ENCODE measurements at regions of chr21 and their contacts with region 1.

Region 1: DNA sequence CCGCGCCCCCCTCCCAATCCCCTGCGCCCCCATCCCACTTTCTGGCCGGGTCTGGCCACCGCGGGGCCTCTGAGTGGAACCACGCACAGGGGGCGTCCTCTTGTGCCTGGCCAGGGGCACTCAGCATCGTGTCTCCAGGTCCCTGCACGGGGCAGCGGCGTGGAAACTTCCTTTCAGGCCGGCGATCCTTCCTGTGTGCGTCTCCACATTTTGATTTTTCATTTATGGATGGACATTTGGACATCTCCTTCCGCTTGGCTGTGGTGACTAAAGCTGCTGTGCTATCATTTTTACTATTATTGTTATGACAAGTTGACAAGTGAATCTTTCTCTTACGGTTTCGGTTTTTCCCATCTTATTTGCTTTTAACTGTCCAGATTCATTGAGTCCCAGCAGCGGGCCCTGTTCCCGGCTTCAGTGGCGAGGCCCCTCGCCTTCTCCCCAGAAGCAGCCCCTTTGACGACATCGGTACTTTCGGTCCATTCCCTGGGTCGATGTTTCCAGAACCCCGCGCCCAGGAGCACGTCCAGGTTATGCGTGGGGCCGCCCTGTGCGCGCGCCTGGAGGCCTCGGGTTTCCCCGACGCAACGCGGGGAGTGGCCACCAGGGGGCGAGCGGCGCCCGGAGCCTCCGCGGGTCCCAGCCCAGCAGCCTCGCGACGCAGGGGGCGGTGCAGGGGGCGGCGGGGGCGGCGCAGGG is 12.4 kb upstream of the SLC19A1 start:
- DNase-seq: peak; percentile 98
- H3K4me3 Mint-ChIP-seq: peak overlapping the region; percentile 88
- H3K27ac Mint-ChIP-seq: peak overlapping the region; percentile 90
- H3K4me1 Mint-ChIP-seq: peaks cover 25% of the 10 kb centered on the region
- H3K27me3 Mint-ChIP-seq: no peaks in the 10 kb centered on the region

Region 2: GRCh38 chr21:45478115-45478801 is 76.4 kb before region 1 on chr21:
- intact Hi-C with region 1: loop called (anchors 5 kb)
- DNase-seq: peak; percentile 93
- H3K4me3 Mint-ChIP-seq: peak overlapping the region; percentile 82
- H3K27ac Mint-ChIP-seq: peak overlapping the region; percentile 98
- H3K4me1 Mint-ChIP-seq: peaks cover 24% of the 10 kb centered on the region
- H3K27me3 Mint-ChIP-seq: no peaks in the 10 kb centered on the region

Region 3: DNA sequence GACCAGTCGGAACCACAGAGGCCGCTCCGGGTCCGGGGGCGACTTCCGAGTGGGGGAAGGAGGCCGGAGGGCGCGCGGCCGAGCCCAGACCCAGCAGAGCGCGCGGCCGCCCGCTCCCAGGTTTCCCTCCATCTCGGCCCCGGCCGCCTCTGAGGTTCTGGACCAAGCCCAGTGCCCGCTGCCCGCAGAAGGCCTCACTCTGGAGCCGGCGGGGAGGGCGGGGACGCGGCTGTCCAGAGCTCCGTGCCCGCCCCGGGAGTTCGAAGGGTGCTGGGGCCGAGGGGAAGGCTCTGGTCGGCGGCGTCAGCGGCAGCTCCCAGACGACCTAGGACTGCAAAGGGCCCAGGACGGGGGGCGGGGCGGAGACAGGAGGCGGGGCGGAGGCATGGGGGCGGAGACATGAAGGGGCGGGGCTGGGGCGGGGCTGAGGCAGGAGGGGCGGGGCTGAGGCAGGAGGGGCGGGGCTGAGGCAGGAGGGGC is 35.7 kb after region 1 on chr21:
- intact Hi-C with region 1: loop called (anchors 1 kb)
- DNase-seq: peak; percentile 91
- H3K4me3 Mint-ChIP-seq: peak overlapping the region; percentile 58
- H3K27ac Mint-ChIP-seq: no peak overlapping the region
- H3K4me1 Mint-ChIP-seq: peaks cover 12% of the 10 kb centered on the region
- H3K27me3 Mint-ChIP-seq: peaks cover 22% of the 10 kb centered on the region

Region 4: DNA sequence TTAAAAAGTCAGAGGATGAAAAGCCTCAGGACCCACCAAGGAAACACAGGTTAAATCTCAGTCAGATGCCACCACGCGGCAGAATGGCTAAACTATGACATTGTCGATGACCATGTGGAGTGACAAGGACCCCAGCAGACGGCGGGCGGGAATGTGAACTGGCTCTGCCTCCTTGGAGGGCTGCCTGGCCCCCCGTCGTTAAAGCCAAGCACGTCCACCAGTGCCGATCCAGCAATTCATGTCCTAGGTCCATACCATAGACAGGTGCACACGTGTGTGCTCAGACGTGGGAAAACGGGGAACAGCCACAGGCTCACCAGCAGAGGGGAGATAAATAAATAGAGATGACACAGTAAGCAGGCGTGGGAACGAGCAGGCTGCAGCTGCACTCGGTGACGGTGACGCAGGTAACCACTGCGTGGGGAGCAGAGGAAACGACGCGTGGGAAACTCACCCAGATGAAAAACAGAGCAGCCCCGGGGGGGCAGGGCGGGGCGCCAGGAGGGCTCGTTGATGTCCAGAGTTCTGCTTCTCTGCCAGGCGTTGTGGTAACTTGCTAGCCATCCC is 60.6 kb after region 1 on chr21:
- intact Hi-C with region 1: loop called (anchors 2 kb)
- DNase-seq: peak; percentile 91
- H3K4me3 Mint-ChIP-seq: peak overlapping the region; percentile 83
- H3K27ac Mint-ChIP-seq: peak overlapping the region; percentile 64
- H3K4me1 Mint-ChIP-seq: peaks cover 15% of the 10 kb centered on the region
- H3K27me3 Mint-ChIP-seq: peaks cover 37% of the 10 kb centered on the region

Region 5: GRCh38 chr21:45655124-45655523 is 100.5 kb after region 1 on chr21:
- intact Hi-C with region 1: no loop called
- DNase-seq: no peak
- H3K4me3 Mint-ChIP-seq: no peak overlapping the region
- H3K27ac Mint-ChIP-seq: no peak overlapping the region
- H3K4me1 Mint-ChIP-seq: peaks cover 12% of the 10 kb centered on the region
- H3K27me3 Mint-ChIP-seq: no peaks in the 10 kb centered on the region

Region 6: GRCh38 chr21:45768751-45769070 is 214.1 kb after region 1 on chr21:
- intact Hi-C with region 1: loop called (anchors 1 kb)
- DNase-seq: peak; percentile 71
- H3K4me3 Mint-ChIP-seq: peak overlapping the region; percentile 63
- H3K27ac Mint-ChIP-seq: peak overlapping the region; percentile 92
- H3K4me1 Mint-ChIP-seq: peaks cover 43% of the 10 kb centered on the region
- H3K27me3 Mint-ChIP-seq: no peaks in the 10 kb centered on the region

Measured in activated CD4-positive, alpha-beta T cell treated with anti-CD3 and anti-CD28 coated beads, Interleukin-2, amount 10 ng/mL, durations not matched to agents 24 days and 14 days (primary cell).